PC-3 (cell line): ENCODE measurements at regions of chr12 and their contacts with region 1.

Region 1: GRCh38 chr12:65823513-65824375 is 539 bp upstream of the HMGA2 start:
- DNase-seq: peak; percentile 93
- ATAC-seq: peak; percentile 48
- H3K4me3 ChIP-seq: peak overlapping the region; percentile 92
- H3K27ac ChIP-seq: peak overlapping the region; percentile 95
- H3K4me1 ChIP-seq: peaks cover 37% of the 10 kb centered on the region
- H3K27me3 ChIP-seq: no peaks in the 10 kb centered on the region
- CTCF ChIP-seq: no peak

Region 2: DNA sequence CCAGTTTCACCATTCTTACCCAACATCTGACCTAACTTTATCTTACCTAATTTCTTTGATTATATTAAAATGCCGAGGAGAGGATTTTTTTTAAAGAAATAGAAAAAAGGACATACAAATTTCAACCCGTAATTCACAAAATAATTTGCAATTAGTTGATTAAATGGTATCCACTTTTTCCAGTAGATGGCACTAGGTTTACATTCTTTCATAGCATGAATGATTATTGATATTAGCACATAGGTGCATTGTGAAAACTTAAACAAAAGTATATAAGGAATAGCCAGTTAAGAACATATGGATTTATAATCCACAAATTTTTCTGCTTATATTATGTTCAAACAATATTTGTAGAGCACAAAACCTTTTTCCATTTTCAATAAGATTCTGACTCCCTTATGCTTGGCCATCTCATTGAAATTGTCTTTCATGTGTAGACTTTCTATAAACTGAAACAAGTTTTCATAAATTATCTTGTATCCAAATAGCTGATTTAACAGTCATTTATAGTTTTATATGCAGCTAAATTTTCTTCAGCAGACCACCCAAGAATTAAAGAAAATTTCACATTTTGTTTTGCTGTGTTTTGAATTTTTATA is 509.9 kb before region 1 on chr12:
- CTCF ChIA-PET with region 1: no interaction called
- POLR2A ChIA-PET with region 1: no interaction called
- intact Hi-C with region 1: loop called (anchors 5 kb)
- DNase-seq: peak; percentile 79
- ATAC-seq: peak; percentile 46; the same call in 1 of the 2 replicates
- H3K4me3 ChIP-seq: no peak overlapping the region; the same call in 1 of the 2 replicates
- H3K27ac ChIP-seq: peak overlapping the region; percentile 30
- H3K4me1 ChIP-seq: peaks cover 24% of the 10 kb centered on the region
- H3K27me3 ChIP-seq: no peaks in the 10 kb centered on the region
- CTCF ChIP-seq: peak; percentile 91

Region 3: DNA sequence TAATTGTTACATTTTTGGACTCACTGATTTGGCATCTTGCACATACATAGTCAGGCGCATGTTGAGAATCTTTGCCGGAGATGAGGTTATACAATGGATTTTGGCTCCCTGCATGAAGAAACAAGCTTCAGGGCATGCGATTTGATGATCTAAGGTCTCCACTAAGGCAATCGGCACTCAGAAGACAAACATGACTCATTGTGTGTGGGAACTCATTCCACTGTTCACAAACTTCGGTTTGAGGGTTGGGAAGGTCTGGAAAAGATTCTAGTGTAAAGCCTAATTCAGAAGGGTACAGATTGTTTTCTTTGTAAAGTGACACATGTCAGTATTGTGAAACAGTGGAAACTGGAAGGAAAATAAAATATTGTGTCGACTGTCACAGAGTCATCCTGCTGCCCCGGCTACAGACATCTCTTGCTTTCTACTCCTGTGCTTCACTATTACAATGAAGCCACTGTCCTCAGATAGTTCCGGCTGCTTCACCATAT is 192.1 kb before region 1 on chr12:
- CTCF ChIA-PET with region 1: no interaction called
- POLR2A ChIA-PET with region 1: no interaction called
- intact Hi-C with region 1: loop called (anchors 1 kb)
- DNase-seq: peak; percentile 99
- ATAC-seq: peak; percentile 49
- H3K4me3 ChIP-seq: no peak overlapping the region; the same call in 1 of the 2 replicates
- H3K27ac ChIP-seq: peak overlapping the region; percentile 99
- H3K4me1 ChIP-seq: peaks cover 65% of the 10 kb centered on the region
- H3K27me3 ChIP-seq: no peaks in the 10 kb centered on the region
- CTCF ChIP-seq: no peak

Region 4: GRCh38 chr12:65656904-65657351 is 166.8 kb before region 1 on chr12:
- CTCF ChIA-PET with region 1: no interaction called
- POLR2A ChIA-PET with region 1: interaction called, 3 read pairs
- intact Hi-C with region 1: loop called (anchors 1 kb)
- DNase-seq: peak; percentile 99
- ATAC-seq: peak; percentile 85
- H3K4me3 ChIP-seq: no peak overlapping the region
- H3K27ac ChIP-seq: peak overlapping the region; percentile 99
- H3K4me1 ChIP-seq: peaks cover 35% of the 10 kb centered on the region
- H3K27me3 ChIP-seq: no peaks in the 10 kb centered on the region
- CTCF ChIP-seq: no peak

Region 5: GRCh38 chr12:65853489-65854370 is 30.0 kb after region 1 on chr12:
- CTCF ChIA-PET with region 1: no interaction called
- POLR2A ChIA-PET with region 1: no interaction called
- intact Hi-C with region 1: no loop called
- DNase-seq: no peak
- ATAC-seq: no peak; the same call in 1 of the 2 replicates
- H3K4me3 ChIP-seq: no peak overlapping the region
- H3K27ac ChIP-seq: peak overlapping the region; percentile 12; the same call in 1 of the 2 replicates
- H3K4me1 ChIP-seq: peaks cover 17% of the 10 kb centered on the region; the same call in 1 of the 2 replicates
- H3K27me3 ChIP-seq: no peaks in the 10 kb centered on the region
- CTCF ChIP-seq: no peak

Region 6: GRCh38 chr12:66107451-66107915 is 283.7 kb after region 1 on chr12:
- CTCF ChIA-PET with region 1: interaction called, 20 read pairs
- POLR2A ChIA-PET with region 1: no interaction called
- intact Hi-C with region 1: no loop called
- DNase-seq: peak; percentile 100
- ATAC-seq: peak; percentile 99
- H3K4me3 ChIP-seq: peak overlapping the region; percentile 10; the same call in 1 of the 2 replicates
- H3K27ac ChIP-seq: no peak overlapping the region
- H3K4me1 ChIP-seq: peaks cover 4% of the 10 kb centered on the region; the same call in 1 of the 2 replicates
- H3K27me3 ChIP-seq: no peaks in the 10 kb centered on the region
- CTCF ChIP-seq: peak; percentile 83